PC-3 (cell line): ENCODE measurements at regions of chr14 and their contacts with region 1.

Region 1: DNA sequence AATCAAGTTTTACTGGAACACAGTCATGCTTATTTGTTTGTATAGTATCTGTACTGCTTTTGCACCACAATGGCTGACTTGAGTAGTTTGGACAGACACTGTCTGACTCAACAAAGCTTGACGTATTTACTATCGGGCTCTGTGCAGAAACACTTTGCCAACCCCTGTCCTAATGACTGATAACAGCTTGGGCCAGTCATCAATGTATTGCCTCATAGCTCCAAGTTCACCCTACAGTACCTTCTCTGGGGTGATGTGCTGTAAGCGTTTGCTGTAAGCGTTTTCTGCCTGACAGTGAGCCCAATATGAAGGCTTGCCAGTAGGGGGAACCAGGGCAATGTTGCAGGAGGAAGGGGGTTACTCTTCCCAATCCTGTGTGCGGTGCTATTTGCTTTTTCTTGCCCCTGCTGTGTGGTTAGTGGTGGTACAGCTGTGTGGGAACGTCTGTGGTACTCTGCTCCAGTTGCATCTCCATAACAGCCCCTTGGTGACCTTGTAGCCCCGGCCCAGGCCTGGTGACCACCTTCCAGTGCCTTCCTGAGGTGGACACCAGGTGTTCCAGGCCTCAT is 5.4 kb upstream of the CCDC177 start:
- DNase-seq: peak; percentile 78
- ATAC-seq: peak; percentile 70
- H3K4me3 ChIP-seq: no peak overlapping the region
- H3K27ac ChIP-seq: no peak overlapping the region
- H3K4me1 ChIP-seq: peaks cover 11% of the 10 kb centered on the region
- H3K27me3 ChIP-seq: peaks cover 10% of the 10 kb centered on the region; the same call in 1 of the 2 replicates
- CTCF ChIP-seq: peak; percentile 74

Region 2: DNA sequence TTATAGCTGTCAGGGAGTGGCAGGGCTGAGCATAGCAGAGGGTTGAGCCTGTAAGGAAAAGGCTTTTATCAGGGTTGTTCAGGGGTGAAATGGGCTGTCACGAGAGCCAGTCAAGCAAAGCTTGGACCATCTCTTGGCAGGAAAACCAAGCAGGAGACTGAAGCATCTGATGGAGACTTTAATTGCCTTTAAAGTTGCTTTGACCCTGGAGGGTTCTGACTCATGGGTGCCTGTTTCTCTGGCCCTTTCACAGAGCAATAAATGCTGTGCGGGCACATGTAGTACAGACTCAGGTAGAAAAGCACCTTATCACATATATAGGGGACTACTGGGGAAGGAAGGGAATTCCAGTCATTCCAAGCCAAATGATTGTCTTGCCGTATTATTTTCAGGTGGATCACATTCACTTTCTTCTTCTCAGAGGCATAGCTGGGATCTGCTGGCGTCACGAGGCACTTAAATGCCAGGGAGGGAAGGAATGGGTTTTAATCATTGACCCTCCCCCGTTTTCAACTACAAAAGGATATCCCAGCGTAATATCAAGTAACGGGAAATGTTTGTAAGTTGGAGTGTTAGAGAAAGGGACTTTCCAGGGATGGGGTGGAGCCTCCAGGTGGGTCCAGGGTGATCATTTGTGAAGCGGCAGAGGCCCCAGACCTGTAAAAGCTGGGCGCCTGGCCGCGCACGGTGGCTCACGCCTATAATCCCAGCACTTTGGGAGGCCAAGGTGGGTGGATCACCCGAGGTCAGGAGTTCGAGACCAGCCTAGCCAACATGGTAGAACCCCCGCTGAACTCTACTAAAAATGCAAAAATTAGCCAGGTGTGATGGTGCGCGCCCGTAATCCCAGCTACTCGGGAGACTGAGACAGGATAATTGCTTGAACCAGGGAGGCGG is 60.6 kb before region 1 on chr14:
- CTCF ChIA-PET with region 1: no interaction called
- POLR2A ChIA-PET with region 1: no interaction called
- intact Hi-C with region 1: no loop called
- DNase-seq: peak; percentile 17
- ATAC-seq: peak; percentile 49
- H3K4me3 ChIP-seq: no peak overlapping the region
- H3K27ac ChIP-seq: no peak overlapping the region
- H3K4me1 ChIP-seq: no peaks in the 10 kb centered on the region
- H3K27me3 ChIP-seq: peaks cover 62% of the 10 kb centered on the region
- CTCF ChIP-seq: no peak

Region 3: GRCh38 chr14:69803753-69804152 is 223.7 kb after region 1 on chr14:
- CTCF ChIA-PET with region 1: interaction called, 12 read pairs
- POLR2A ChIA-PET with region 1: no interaction called
- intact Hi-C with region 1: no loop called
- DNase-seq: peak; percentile 48
- ATAC-seq: peak; percentile 91
- H3K4me3 ChIP-seq: no peak overlapping the region
- H3K27ac ChIP-seq: no peak overlapping the region
- H3K4me1 ChIP-seq: no peaks in the 10 kb centered on the region
- H3K27me3 ChIP-seq: peaks cover 26% of the 10 kb centered on the region
- CTCF ChIP-seq: peak; percentile 60

Region 4: DNA sequence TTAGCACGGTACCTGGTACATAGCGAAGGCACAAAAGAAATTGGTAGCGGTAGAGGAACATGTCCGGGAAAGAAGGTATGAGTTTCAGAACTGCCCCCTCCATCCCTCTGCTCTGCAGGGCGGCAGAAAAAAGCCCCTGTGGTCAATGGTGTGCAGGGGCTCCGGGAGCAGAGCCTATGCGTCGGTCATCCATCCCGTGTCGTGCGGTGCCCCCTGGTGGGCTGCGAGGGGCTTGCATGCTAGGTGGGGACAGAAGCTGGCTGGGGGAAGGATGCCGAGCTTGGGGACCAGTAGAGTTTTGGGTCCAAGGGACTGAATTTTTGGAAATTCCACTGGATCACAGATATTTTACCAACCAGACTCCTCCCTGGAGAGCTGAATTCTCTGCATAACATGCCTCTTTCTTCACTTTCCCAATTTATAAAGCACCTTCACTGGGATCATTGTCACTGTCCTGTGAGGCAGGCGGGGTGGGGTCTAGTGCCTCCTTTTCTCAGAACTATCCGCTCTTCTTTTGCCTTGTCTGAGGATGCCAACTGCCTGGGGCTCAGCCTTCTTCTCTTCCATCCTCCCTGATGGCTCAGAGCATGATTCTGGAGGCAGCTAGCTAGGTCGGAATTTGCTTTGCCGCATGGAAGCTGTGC is 447.8 kb after region 1 on chr14:
- CTCF ChIA-PET with region 1: no interaction called
- POLR2A ChIA-PET with region 1: no interaction called
- intact Hi-C with region 1: loop called (anchors 1 kb)
- DNase-seq: peak; percentile 72
- ATAC-seq: peak; percentile 86
- H3K4me3 ChIP-seq: no peak overlapping the region
- H3K27ac ChIP-seq: no peak overlapping the region
- H3K4me1 ChIP-seq: peaks cover 4% of the 10 kb centered on the region; the same call in 1 of the 2 replicates
- H3K27me3 ChIP-seq: peaks cover 67% of the 10 kb centered on the region
- CTCF ChIP-seq: peak; percentile 93